Activated naive CD4-positive, alpha-beta T cell treated with anti-CD3 and anti-CD28 coated beads for 36 hours (primary cell): ENCODE measurements at regions of chr20 and their contacts with region 1.

Region 1: GRCh38 chr20:22691369-22692118 is 107.2 kb upstream of the FOXA2 start:
- DNase-seq: peak; percentile 64
- H3K4me3 Mint-ChIP-seq: no peak overlapping the region
- H3K27ac Mint-ChIP-seq: no peak overlapping the region
- H3K4me1 Mint-ChIP-seq: no peaks in the 10 kb centered on the region
- H3K27me3 Mint-ChIP-seq: peaks cover 6% of the 10 kb centered on the region

Region 2: GRCh38 chr20:22490287-22491193 is 201.0 kb before region 1 on chr20:
- CTCF ChIA-PET with region 1: no interaction called
- intact Hi-C with region 1: no loop called
- DNase-seq: no peak
- H3K4me3 Mint-ChIP-seq: no peak overlapping the region
- H3K27ac Mint-ChIP-seq: no peak overlapping the region
- H3K4me1 Mint-ChIP-seq: no peaks in the 10 kb centered on the region
- H3K27me3 Mint-ChIP-seq: no peaks in the 10 kb centered on the region

Region 3: DNA sequence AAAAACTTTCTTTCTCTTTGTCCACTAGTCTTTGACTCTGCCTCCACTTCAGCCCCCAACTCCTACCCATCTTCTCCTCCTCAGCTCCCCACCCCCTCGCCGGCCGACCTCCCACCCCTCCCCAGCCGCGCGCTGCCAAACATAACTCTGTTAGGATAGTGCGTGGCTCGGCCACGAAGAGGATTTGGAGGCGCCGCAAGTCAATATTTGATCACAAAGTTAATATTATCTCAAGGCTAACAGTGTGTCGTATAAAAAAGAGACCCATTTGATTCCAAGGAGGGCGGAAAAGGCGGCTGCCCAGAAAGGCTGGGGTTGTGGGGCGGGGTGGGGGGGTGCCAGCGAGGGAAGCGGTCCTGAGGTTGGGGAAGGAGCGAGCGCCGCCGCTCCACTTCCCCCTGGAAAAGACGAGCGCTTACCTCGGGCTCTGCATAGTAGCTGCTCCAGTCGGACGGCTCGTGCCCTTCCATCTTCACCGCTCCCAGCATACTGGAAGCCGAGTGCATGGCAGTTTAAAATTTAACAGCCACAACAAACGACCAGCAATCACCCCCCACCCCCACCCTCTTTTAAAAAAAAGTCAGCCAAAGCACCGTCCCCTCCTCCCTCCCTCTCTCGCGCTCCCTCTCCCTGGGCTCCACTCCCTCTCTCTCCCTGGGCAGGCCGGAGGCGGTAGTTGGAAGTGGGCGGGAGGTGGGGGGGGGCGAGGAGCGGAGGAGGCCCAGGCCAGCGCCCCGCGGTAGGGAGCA is 107.6 kb before region 1 on chr20:
- CTCF ChIA-PET with region 1: no interaction called
- intact Hi-C with region 1: no loop called
- DNase-seq: no peak
- H3K4me3 Mint-ChIP-seq: no peak overlapping the region
- H3K27ac Mint-ChIP-seq: no peak overlapping the region
- H3K4me1 Mint-ChIP-seq: peaks cover 4% of the 10 kb centered on the region
- H3K27me3 Mint-ChIP-seq: peaks cover 69% of the 10 kb centered on the region

Region 4: DNA sequence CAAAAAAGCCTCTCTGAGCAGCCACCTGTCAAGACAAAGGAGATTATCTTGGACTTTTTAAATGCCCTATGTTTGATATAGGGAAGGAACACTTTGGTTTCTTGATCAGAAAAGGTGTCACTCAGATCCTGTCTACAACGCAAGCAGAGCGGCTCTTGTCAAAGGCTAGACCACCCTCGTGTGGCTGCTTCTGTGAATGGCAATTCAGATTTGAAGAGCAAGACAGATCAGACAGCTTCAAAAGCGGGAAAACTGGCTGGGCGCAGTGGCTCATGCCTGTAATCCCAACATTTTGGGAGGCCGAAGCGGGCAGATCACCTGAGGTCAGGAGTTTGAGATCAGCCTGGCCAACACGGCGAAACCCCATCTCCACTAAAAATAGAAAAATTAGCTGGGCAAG is 649.0 kb after region 1 on chr20:
- CTCF ChIA-PET with region 1: interaction called, 18 read pairs
- intact Hi-C with region 1: no loop called
- DNase-seq: peak; percentile 55
- H3K4me3 Mint-ChIP-seq: no peak overlapping the region
- H3K27ac Mint-ChIP-seq: no peak overlapping the region
- H3K4me1 Mint-ChIP-seq: no peaks in the 10 kb centered on the region
- H3K27me3 Mint-ChIP-seq: no peaks in the 10 kb centered on the region

Region 5: GRCh38 chr20:23497536-23497935 is 806.0 kb after region 1 on chr20:
- CTCF ChIA-PET with region 1: no interaction called
- intact Hi-C with region 1: no loop called
- DNase-seq: peak; percentile 58
- H3K4me3 Mint-ChIP-seq: no peak overlapping the region
- H3K27ac Mint-ChIP-seq: no peak overlapping the region
- H3K4me1 Mint-ChIP-seq: peaks cover 8% of the 10 kb centered on the region
- H3K27me3 Mint-ChIP-seq: peaks cover 20% of the 10 kb centered on the region

Region 6: GRCh38 chr20:23606652-23607049 is 915.1 kb after region 1 on chr20:
- CTCF ChIA-PET with region 1: no interaction called
- intact Hi-C with region 1: loop called (anchors 1 kb)
- DNase-seq: peak; percentile 77
- H3K4me3 Mint-ChIP-seq: no peak overlapping the region
- H3K27ac Mint-ChIP-seq: no peak overlapping the region
- H3K4me1 Mint-ChIP-seq: no peaks in the 10 kb centered on the region
- H3K27me3 Mint-ChIP-seq: peaks cover 6% of the 10 kb centered on the region